SK-N-SH (cell line): ENCODE measurements at regions of chr19 and their contacts with region 1.

Region 1: DNA sequence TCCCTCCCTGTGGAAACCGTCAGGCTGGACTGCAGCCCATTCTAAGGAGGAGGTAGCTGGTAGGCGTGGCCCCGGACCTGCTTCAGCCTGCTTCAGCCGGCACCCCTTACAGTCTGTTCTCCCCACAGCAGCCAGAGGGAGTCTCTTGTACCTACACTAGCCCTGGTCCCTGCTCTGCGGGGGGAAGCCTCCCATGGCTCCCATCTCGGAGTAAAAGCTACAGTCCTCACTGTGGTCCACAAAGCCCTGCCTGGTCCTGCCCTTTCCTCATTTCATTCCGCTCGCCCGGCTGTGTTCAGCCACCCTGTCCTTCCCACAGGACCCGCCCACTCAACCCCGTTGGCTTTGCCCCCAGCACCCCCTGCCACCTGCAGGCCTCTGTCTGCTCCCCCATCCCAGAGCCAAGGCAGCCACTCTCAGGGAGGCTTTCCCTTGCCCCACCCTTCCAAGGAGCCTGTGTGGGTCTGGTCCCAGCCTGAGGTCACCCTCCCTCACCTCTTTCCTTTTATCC is 1.3 kb downstream of the PGLYRP1 start:
- DNase-seq: no peak
- H3K4me3 ChIP-seq: no peak overlapping the region
- H3K27ac ChIP-seq: no peak overlapping the region
- H3K4me1 ChIP-seq: no peaks in the 10 kb centered on the region; a peak in 1 of 4 replicates
- H3K27me3 ChIP-seq: no peaks in the 10 kb centered on the region
- CTCF ChIP-seq: no peak
- EP300 ChIP-seq: no peak
- RAD21 ChIP-seq: no peak

Region 2: GRCh38 chr19:46049597-46049996 is 28.0 kb after region 1 on chr19:
- CTCF ChIA-PET with region 1: interaction called, 91 read pairs
- POLR2A ChIA-PET with region 1: no interaction called
- DNase-seq: no peak
- H3K4me3 ChIP-seq: no peak overlapping the region
- H3K27ac ChIP-seq: no peak overlapping the region
- H3K4me1 ChIP-seq: no peaks in the 10 kb centered on the region
- H3K27me3 ChIP-seq: peaks cover 87% of the 10 kb centered on the region; the same call in 1 of the 2 replicates
- CTCF ChIP-seq: no peak
- EP300 ChIP-seq: no peak
- RAD21 ChIP-seq: no peak

Region 3: GRCh38 chr19:46265217-46265828 is 243.7 kb after region 1 on chr19:
- CTCF ChIA-PET with region 1: interaction called, 109 read pairs
- POLR2A ChIA-PET with region 1: no interaction called
- DNase-seq: peak; percentile 78
- H3K4me3 ChIP-seq: peak overlapping the region in 1 of 2 experiments; percentile 7; a peak in 1 of 4 replicates
- H3K27ac ChIP-seq: no peak overlapping the region
- H3K4me1 ChIP-seq: no peaks in the 10 kb centered on the region
- H3K27me3 ChIP-seq: peaks cover 30% of the 10 kb centered on the region
- CTCF ChIP-seq: peak; percentile 87
- EP300 ChIP-seq: no peak
- RAD21 ChIP-seq: peak; percentile 90